ENCODE measurements at regions of chr1 and their contacts with region 1.

Region 1: GRCh38 chr1:21355956-21356355 is 65.7 kb upstream of the ECE1 start:
- DNase-seq: no peak
- H3K4me3 ChIP-seq: no peak overlapping the region
- CTCF ChIP-seq: no peak

Region 2: DNA sequence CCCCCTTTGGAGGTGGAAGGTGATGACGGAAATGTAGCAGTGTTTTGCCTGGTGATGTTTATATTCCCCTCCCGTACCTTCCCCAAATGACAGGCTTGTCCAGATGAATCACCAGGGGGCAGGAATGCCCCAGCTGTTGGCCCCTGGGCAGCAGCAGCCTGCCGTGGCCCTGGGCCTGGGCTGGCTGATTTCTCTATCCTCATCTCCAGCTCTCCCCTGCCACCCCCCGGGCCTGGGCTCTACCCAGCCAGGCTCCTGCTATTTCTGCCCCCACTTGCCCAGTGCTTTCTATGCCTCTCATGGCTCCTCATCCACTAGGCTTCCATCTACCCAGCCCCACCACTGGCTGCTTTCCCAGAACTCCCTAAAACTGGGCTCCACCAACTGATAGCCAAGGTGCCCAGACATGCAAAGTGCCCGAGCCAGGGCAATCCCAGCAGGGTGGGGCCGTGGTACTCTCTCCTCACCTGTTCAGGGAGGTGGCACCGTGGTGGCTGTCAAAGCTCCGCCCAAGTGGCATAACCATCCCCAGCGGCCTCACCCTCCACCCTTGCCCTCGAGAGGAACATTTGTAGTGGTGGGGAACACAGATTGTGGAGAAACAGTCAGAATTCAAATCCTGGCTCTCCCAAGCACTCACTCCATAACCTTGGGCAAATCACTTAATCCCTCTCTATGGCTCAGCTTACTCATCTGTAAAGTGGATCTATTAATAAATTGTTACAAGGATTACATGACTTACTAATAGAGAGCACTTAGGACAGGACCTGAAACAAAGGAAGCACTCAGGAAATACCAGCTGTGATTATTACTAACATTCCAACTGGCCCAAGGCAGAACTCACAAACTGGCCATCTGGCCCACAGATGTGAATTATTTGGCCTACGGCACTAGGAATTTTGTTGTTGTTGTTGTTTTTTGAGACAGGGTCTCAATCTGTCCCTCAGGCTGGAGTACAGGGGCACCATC is 52.9 kb before region 1 on chr1:
- CTCF ChIA-PET with region 1: no interaction called
- POLR2A ChIA-PET with region 1: no interaction called
- DNase-seq: peak; percentile 36
- H3K4me3 ChIP-seq: no peak overlapping the region
- CTCF ChIP-seq: no peak

Region 3: DNA sequence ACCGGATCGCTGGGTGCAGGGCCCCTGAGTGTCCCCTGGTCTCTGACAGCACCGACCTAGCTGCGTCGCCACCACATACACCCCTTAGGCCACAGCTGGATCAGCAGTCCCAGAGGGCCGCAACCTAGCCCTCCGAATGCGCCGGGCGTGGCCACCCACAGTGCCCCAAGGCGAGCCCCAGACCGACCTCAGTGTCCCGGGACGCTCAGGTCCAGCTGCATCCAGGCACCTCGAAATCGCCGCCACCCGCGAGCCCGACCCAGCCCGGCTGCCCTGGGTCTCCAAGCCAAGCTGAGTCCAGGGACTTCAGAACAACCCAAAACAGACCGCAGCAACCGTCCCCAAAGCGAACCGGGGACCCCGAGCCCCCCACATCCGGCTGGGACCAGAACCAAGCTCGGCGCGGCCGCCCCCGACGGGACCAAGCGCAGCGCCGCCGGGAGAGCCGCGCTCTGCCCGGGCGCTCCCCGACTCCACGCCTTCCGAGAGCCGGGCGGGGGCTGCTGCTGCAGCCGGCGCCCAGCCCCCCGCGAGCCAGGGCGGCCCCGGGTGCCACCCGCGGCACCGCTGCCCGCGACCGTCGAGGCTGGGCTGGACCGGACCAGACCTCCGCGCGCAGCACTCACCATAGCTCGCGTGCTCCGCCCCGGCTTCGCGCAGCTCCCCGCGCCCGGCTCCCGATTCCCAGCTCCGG is 11.1 kb before region 1 on chr1:
- CTCF ChIA-PET with region 1: interaction called, 12 read pairs
- POLR2A ChIA-PET with region 1: no interaction called
- DNase-seq: no peak
- H3K4me3 ChIP-seq: peak overlapping the region; percentile 84
- CTCF ChIP-seq: no peak

Region 4: GRCh38 chr1:21451212-21451812 is 95.4 kb after region 1 on chr1:
- CTCF ChIA-PET with region 1: no interaction called
- POLR2A ChIA-PET with region 1: no interaction called
- DNase-seq: peak; percentile 68
- H3K4me3 ChIP-seq: no peak overlapping the region
- CTCF ChIP-seq: no peak

Region 5: DNA sequence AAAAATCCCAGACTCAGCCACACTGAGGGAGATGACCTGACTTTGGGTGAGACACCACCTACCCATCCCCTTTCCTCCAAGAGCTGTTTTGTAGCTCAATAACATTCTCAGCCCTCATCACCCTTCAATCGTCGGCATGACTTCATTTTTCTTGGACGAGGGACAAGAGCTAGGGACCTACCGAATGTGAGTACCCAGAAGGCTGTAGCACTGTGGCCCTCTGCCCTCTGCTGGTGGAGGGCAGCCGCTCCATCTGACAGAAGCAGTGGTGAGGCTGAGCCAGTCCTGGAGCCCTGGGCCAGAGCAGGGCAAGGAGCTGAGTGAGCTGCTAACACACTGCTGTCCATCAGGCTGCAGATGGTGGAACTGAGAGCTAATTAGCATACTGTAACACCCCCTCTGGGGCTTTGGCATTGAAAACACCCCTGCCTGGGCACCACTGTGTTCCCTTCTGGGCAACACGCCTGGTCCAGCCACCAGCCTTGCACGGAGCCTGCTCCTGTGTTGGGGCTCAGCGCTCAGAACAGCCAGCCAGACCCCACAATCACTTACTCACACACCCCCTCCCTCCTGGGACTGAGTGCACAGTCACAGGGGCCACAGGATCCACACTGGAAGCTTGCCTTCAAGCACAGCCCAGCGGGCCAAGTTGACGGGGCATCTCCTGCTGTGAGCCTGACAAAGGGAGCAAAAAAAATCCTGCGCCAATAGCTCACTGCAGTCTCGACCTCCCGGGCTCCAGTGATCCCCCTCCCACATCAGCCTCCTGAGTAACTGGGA is 135.0 kb after region 1 on chr1:
- CTCF ChIA-PET with region 1: no interaction called
- POLR2A ChIA-PET with region 1: no interaction called
- DNase-seq: no peak
- H3K4me3 ChIP-seq: no peak overlapping the region
- CTCF ChIP-seq: peak; percentile 81

Measured in AG04449 (cell line).